Colonic mucosa (tissue), 4 donors: ENCODE measurements at regions of chr1 and their contacts with region 1.

Region 1: GRCh38 chr1:117664314-117664713 is 58.5 kb downstream of the TENT5C start:
- DNase-seq: no peak
- H3K4me3 ChIP-seq: no peak overlapping the region
- H3K27ac ChIP-seq: peak overlapping the region; percentile 26
- H3K4me1 ChIP-seq: peaks cover 5% of the 10 kb centered on the region
- H3K27me3 ChIP-seq: no peaks in the 10 kb centered on the region
- CTCF ChIP-seq: no peak

Region 2: DNA sequence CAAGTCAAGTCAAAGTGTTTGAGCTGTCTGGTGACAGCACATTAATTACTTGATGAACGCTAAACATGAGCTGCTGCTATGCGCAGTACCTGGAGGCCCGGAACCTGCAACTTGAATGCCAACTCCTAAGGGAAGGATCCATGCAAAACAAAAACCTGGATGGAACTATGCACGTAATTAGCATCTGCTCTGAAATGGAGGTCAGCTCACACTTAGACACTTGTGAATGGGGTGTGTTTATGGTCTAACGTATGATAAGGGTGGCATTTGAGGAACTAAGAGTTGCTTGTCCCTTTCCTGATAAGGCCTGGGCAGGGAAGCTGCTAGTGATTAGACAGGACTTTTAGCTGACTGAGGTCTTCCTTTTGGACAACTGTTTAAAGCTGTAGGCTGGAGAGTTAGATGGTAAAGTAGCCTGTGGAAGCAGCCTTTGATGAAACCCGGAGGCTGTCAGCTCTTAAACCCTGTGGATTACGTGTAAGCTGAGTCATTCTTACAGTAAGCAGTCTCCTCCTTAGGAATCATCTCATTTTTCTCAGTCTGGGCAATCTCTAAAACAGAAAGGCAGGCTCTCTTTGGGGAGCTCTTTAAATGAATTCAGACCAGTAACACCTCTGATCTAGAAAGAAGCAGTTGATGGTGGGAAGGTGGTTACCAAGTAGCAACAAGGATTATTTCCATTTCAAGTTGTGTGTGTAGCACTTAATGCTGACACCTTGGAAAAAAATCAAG is 51.6 kb before region 1 on chr1:
- intact Hi-C with region 1: loop called (anchors 10 kb)
- DNase-seq: peak; percentile 65
- H3K4me3 ChIP-seq: no peak overlapping the region
- H3K27ac ChIP-seq: peak overlapping the region; percentile 75
- H3K4me1 ChIP-seq: peaks cover 25% of the 10 kb centered on the region
- H3K27me3 ChIP-seq: no peaks in the 10 kb centered on the region
- CTCF ChIP-seq: no peak

Region 3: DNA sequence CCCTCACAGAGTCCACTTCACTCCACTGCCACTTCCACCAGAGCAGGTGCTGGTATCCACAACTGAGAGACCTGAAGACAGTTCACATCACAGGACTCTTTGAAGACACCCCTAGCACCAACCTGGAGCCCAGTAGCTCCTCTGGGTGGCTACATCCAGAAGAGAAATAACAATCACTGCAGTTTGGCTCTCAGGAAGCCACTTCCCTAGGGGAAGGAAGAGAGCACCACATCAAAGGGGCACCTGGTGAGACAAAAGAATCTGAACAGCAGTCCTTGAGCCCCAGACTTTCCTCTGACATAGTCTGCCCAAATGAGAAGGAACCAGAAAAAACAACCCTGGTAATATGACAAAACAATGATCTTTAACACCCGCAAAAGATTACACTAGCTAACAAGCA is 54.7 kb after region 1 on chr1:
- intact Hi-C with region 1: no loop called
- DNase-seq: no peak
- H3K4me3 ChIP-seq: no peak overlapping the region
- H3K27ac ChIP-seq: no peak overlapping the region
- H3K4me1 ChIP-seq: no peaks in the 10 kb centered on the region
- H3K27me3 ChIP-seq: no peaks in the 10 kb centered on the region
- CTCF ChIP-seq: no peak